Activated CD4-positive, alpha-beta T cell treated with anti-CD3 and anti-CD28 coated beads for 36 hours (primary cell): ENCODE measurements at regions of chr15 and their contacts with region 1.

Region 1: GRCh38 chr15:59372352-59373211 is at the start of gene MYO1E:
- DNase-seq: peak; percentile 47
- ATAC-seq: peak; percentile 75
- H3K4me3 Mint-ChIP-seq: peak within 1 kb of the TSS; percentile 78
- H3K27ac Mint-ChIP-seq: peak within 1 kb of the TSS; percentile 51
- H3K4me1 Mint-ChIP-seq: peaks cover 14% of the 10 kb centered on the region
- H3K27me3 Mint-ChIP-seq: peaks cover 47% of the 10 kb centered on the region
- total RNA-seq, gene MYO1E: 8.0 to 12.6 TPM

Region 2: DNA sequence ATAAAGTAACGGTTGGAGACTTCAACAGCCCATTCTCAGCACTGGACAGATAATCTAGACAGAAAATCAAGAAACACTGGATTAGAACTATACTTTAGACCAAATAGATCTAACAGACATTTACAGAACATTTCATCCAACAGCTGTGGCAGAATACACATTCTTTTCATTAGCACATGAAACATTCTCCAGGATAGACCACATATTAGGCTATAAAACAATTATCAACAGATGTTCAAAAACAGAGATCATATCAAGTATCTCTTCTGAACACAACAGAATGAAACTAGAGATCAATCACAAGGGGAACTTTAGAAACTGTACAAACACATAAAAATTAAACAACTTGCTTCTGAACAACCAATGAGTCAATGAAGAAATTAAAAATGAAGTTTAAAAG is 756.4 kb before region 1 on chr15:
- CTCF ChIA-PET with region 1: no interaction called
- POLR2A ChIA-PET with region 1: no interaction called
- intact Hi-C with region 1: no loop called
- DNase-seq: no peak
- ATAC-seq: no peak
- H3K4me3 Mint-ChIP-seq: no peak overlapping the region
- H3K27ac Mint-ChIP-seq: no peak overlapping the region
- H3K4me1 Mint-ChIP-seq: peaks cover 9% of the 10 kb centered on the region
- H3K27me3 Mint-ChIP-seq: no peaks in the 10 kb centered on the region

Region 3: DNA sequence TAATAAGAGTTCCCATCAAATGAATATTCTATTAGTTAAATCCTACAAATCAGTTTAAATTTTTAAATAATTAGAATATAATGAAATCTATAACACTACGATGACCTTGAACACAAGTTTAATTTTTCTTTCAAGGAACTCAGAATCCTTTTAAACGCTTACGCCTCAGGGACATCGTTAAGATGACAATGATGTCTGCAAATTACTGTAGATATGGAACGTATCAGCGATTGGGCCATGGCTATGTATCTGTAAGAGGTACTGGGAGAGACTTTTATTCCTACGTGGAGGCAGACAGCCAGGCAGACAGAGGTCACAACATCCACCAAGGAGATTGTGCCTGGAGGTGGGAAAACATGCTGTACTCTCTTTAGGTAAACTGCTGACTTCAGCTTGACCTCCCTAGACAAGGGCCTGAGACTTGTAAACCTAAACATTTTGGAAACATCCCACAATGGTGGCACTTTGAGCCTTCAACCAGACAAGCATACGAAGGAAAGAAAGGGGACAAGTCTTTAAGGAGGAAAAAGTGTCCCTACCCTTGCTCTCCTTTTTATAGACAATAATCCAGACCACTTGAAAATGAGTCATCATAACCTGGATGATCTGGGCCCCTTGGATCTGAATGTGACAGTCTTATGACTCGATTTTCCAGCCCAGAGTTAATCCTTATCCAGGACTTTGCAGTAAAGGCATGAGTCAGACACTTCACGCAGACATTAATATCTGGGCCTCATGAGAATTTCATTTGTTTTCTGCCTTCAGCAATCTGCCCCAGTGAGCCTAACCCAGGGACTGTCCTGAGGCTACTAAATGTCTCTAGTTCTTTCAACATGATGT is 172.7 kb before region 1 on chr15:
- CTCF ChIA-PET with region 1: no interaction called
- POLR2A ChIA-PET with region 1: no interaction called
- intact Hi-C with region 1: no loop called
- DNase-seq: no peak
- ATAC-seq: no peak
- H3K4me3 Mint-ChIP-seq: no peak overlapping the region
- H3K27ac Mint-ChIP-seq: no peak overlapping the region
- H3K4me1 Mint-ChIP-seq: peaks cover 3% of the 10 kb centered on the region
- H3K27me3 Mint-ChIP-seq: no peaks in the 10 kb centered on the region

Region 4: DNA sequence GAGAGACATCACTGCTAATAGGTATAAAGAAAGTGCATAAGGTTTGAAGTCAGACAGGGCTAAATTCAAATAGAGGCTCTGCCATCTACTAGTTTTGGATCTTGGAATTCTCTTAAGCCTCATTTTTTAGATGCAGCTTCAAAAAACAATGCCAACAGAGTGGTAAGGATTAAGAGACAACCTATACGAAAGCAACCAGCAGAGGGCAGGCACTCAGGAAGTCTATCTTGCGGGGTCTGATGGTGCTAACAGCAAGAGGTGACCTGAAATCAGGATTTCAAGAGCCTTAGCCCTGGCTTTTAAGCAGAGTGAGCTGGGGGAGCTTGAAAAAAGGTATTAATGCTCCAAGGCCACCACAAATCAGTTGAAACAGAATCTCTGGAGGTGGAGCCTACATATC is 125.2 kb before region 1 on chr15:
- CTCF ChIA-PET with region 1: interaction called, 3 read pairs
- POLR2A ChIA-PET with region 1: no interaction called
- intact Hi-C with region 1: loop called (anchors 5 to 10 kb)
- DNase-seq: peak; percentile 66
- ATAC-seq: peak; percentile 55
- H3K4me3 Mint-ChIP-seq: no peak overlapping the region
- H3K27ac Mint-ChIP-seq: no peak overlapping the region
- H3K4me1 Mint-ChIP-seq: peaks cover 3% of the 10 kb centered on the region
- H3K27me3 Mint-ChIP-seq: no peaks in the 10 kb centered on the region

Region 5: DNA sequence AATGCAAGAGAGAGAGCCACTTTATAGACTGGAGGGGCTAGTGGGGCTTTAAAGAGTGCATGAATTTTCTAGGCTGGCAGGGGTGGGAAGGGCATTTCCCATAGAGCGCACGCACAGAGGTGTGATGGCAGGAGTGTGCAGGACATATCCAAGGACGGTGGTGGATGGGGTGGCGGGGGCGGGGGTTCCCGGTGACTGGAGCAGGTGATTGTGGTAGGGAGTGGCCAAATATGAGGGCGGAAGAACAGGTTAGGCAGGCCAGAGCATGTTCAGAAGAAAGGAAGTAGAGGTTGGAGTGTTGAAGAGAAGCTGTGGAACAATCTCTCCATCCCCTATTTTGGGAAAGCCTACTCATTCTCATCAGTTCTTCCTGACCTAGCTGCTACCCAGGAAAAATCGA is 83.5 kb after region 1 on chr15:
- CTCF ChIA-PET with region 1: no interaction called
- POLR2A ChIA-PET with region 1: no interaction called
- intact Hi-C with region 1: no loop called
- DNase-seq: no peak
- ATAC-seq: no peak
- H3K4me3 Mint-ChIP-seq: no peak overlapping the region
- H3K27ac Mint-ChIP-seq: no peak overlapping the region
- H3K4me1 Mint-ChIP-seq: no peaks in the 10 kb centered on the region
- H3K27me3 Mint-ChIP-seq: no peaks in the 10 kb centered on the region